K562 (cell line): ENCODE measurements at regions of chr1 and their contacts with region 1.

Region 1: GRCh38 chr1:88877382-88877825 is 14.0 kb downstream of the GTF2B start:
- DNase-seq: peak in 2 of 4 experiments; percentile 6 to 16
- ATAC-seq: peak; percentile 45
- H3K4me3 ChIP-seq: no peak overlapping the region
- H3K27ac ChIP-seq: no peak overlapping the region
- H3K4me1 ChIP-seq: no peaks in the 10 kb centered on the region; a peak in 1 of 5 replicates
- H3K27me3 ChIP-seq: no peaks in the 10 kb centered on the region
- CTCF ChIP-seq: peak in 2 of 3 experiments; percentile 50 to 56; a peak in 4 of 6 replicates
- EP300 ChIP-seq: no peak
- POLR2A ChIP-seq: no peak
- RAD21 ChIP-seq: peak; percentile 50 to 57

Region 2: DNA sequence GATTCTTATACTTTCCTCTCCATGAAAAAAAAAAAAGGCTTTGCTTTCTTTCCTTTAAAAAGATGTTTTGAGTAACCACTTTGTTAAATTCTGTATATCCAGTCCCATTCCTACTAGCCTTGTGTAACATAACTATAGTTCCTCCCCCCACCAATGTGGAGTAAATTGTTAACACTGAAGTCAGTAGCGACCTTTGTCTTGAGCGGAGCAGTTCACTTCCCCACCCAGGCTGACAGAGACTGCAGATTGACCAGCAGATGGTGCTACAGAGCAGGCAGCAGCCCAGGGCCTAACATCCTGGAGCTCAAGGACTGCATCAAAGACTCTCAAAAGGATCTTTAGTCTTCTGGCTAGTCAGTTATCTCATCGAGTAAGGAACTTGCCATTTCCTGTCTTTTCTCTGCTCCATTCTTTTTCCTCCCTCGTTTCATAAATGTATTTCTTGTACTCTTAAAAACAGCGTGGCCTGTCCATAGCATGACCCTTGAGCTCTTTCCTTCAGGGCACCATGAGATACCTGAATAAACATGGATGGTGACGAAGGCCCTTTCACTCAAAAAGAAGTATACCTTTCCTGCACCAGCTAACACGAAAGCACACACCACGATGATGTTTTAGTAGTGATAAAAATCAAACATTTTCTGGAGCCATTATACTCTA is 696.8 kb before region 1 on chr1:
- CTCF ChIA-PET with region 1: no interaction called
- POLR2A ChIA-PET with region 1: no interaction called
- in situ Hi-C with region 1: no loop called
- intact Hi-C with region 1: loop called (anchors 10 kb)
- DNase-seq: peak; percentile 41 to 62 (median 43)
- ATAC-seq: peak; percentile 97
- H3K4me3 ChIP-seq: no peak overlapping the region
- H3K27ac ChIP-seq: no peak overlapping the region
- H3K4me1 ChIP-seq: no peaks in the 10 kb centered on the region
- H3K27me3 ChIP-seq: no peaks in the 10 kb centered on the region
- CTCF ChIP-seq: peak; percentile 61 to 80 (median 65)
- EP300 ChIP-seq: no peak
- POLR2A ChIP-seq: no peak
- RAD21 ChIP-seq: peak; percentile 55 to 72

Region 3: GRCh38 chr1:88608139-88608943 is 269.1 kb before region 1 on chr1:
- CTCF ChIA-PET with region 1: interaction called, 3 read pairs
- POLR2A ChIA-PET with region 1: no interaction called
- in situ Hi-C with region 1: no loop called
- intact Hi-C with region 1: loop called (anchors 1 kb)
- DNase-seq: peak; percentile 21 to 52 (median 30)
- ATAC-seq: peak; percentile 88
- H3K4me3 ChIP-seq: no peak overlapping the region
- H3K27ac ChIP-seq: no peak overlapping the region
- H3K4me1 ChIP-seq: no peaks in the 10 kb centered on the region
- H3K27me3 ChIP-seq: no peaks in the 10 kb centered on the region
- CTCF ChIP-seq: peak; percentile 36 to 70 (median 59); a peak in 5 of 6 replicates
- EP300 ChIP-seq: no peak
- POLR2A ChIP-seq: no peak
- RAD21 ChIP-seq: peak; percentile 52 to 62

Region 4: GRCh38 chr1:88655685-88656299 is 221.6 kb before region 1 on chr1:
- CTCF ChIA-PET with region 1: interaction called, 10 read pairs
- POLR2A ChIA-PET with region 1: no interaction called
- in situ Hi-C with region 1: no loop called
- intact Hi-C with region 1: loop called (anchors 1 kb)
- DNase-seq: peak; percentile 13 to 39 (median 18)
- ATAC-seq: no peak
- H3K4me3 ChIP-seq: no peak overlapping the region
- H3K27ac ChIP-seq: no peak overlapping the region
- H3K4me1 ChIP-seq: no peaks in the 10 kb centered on the region
- H3K27me3 ChIP-seq: no peaks in the 10 kb centered on the region
- CTCF ChIP-seq: peak in 2 of 3 experiments; percentile 25 to 68; a peak in 4 of 6 replicates
- EP300 ChIP-seq: no peak
- POLR2A ChIP-seq: no peak
- RAD21 ChIP-seq: peak in 1 of 2 experiments; percentile 66; a peak in 3 of 4 replicates

Region 5: GRCh38 chr1:88736639-88737248 is 140.7 kb before region 1 on chr1:
- CTCF ChIA-PET with region 1: no interaction called
- POLR2A ChIA-PET with region 1: no interaction called
- in situ Hi-C with region 1: no loop called
- intact Hi-C with region 1: loop called (anchors 5 kb)
- DNase-seq: peak; percentile 12 to 33 (median 19)
- ATAC-seq: peak; percentile 89
- H3K4me3 ChIP-seq: no peak overlapping the region
- H3K27ac ChIP-seq: no peak overlapping the region
- H3K4me1 ChIP-seq: no peaks in the 10 kb centered on the region
- H3K27me3 ChIP-seq: no peaks in the 10 kb centered on the region
- CTCF ChIP-seq: peak; percentile 44 to 53 (median 45)
- EP300 ChIP-seq: no peak
- POLR2A ChIP-seq: no peak
- RAD21 ChIP-seq: peak in 1 of 2 experiments; percentile 33; a peak in 1 of 4 replicates

Region 6: DNA sequence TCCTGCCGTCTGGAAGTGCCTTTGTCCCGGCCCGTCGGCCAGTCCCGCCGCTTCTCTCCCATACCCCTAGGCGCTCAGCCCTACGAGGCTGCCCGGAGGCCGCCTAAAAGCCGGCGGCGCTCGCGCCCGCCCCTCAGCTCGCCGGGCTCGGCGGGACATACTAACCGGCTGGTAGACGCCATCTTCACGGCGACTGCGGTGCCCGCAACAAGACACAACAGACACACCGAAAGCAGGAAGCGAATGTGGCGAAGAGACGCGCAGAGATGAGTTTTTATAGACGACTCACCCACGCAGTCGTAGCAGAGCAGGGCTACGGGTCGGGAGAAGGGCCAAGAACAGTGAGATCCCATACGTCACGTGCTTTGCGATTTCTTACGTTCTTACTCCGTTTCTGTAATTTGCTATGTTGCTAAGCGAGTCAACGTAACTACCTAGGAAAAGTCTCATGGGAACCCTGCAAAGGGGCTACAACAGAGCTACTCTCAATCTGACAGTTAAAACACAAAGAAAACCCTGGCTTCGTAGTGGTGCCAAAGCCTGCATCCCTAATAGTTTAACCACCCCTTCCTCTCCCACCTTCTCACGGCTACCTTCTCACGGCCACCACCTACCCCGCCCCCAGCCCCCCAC is 14.0 kb after region 1 on chr1 and contains the start of gene GTF2B:
- CTCF ChIA-PET with region 1: no interaction called
- POLR2A ChIA-PET with region 1: interaction called, 10 read pairs
- in situ Hi-C with region 1: no loop called
- intact Hi-C with region 1: no loop called
- DNase-seq: peak; percentile 70 to 95 (median 76)
- ATAC-seq: peak; percentile 87
- H3K4me3 ChIP-seq: peak within 1 kb of the TSS; percentile 92
- H3K27ac ChIP-seq: peak within 1 kb of the TSS; percentile 94
- H3K4me1 ChIP-seq: peaks cover 0 to 14% of the 10 kb centered on the region in 2 experiments; a peak in 3 of 5 replicates
- H3K27me3 ChIP-seq: no peaks in the 10 kb centered on the region
- CTCF ChIP-seq: no peak
- EP300 ChIP-seq: peak; percentile 52
- POLR2A ChIP-seq: peak; percentile 99
- RAD21 ChIP-seq: no peak
- polyA plus RNA-seq, gene GTF2B: 94.1 to 113 TPM